Activated CD4-positive, alpha-beta memory T cell treated with anti-CD3 and anti-CD28 coated beads for 36 hours (primary cell): ENCODE measurements at regions of chr7 and their contacts with region 1.

Region 1: GRCh38 chr7:120981888-120982615 is 6.5 kb upstream of the CPED1 start:
- DNase-seq: peak; percentile 27
- H3K4me3 Mint-ChIP-seq: no peak overlapping the region
- H3K27ac Mint-ChIP-seq: peak overlapping the region; percentile 1
- H3K4me1 Mint-ChIP-seq: peaks cover 12% of the 10 kb centered on the region
- H3K27me3 Mint-ChIP-seq: peaks cover 5% of the 10 kb centered on the region

Region 2: DNA sequence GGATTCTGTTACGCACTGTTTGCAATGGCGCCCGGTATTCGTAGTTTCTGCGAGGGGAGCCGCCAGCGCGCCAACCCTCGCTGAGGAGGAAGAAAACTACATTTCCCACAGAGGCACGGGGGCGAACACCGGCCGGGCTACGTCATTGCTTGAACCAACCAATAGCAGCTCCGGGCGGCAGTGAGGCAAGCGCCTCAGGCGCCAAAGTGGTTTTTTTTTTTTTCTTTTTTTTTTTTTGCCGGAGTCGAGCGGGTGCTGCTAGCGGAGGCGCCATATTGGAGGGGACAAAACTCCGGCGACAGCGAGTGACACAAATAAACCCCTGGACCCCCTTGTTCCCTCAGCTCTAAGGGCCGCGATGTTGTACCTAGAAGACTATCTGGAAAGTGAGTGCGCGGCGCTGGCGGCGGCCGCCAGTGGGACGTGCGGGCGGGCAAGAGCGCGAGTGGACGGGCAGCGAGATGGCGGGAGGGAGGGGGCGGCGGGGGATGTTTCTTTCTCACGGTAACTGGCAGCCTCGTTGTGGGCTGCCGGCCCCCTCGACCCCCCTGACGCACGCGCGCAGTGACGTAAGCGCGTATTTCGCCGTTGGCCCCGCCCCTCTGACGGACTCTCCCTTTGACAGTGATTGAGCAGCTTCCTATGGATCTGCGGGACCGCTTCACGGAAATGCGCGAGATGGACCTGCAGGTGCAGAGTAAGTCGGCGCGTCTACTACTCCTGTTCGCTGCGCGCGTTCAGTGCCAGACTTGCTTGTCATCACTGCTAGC is 31.3 kb before region 1 on chr7 and contains the start of gene ING3:
- CTCF ChIA-PET with region 1: no interaction called
- POLR2A ChIA-PET with region 1: no interaction called
- intact Hi-C with region 1: loop called (anchors 1 kb)
- DNase-seq: peak; percentile 98
- H3K4me3 Mint-ChIP-seq: peak within 1 kb of the TSS; percentile 94
- H3K27ac Mint-ChIP-seq: peak within 1 kb of the TSS; percentile 98
- H3K4me1 Mint-ChIP-seq: peaks cover 22% of the 10 kb centered on the region
- H3K27me3 Mint-ChIP-seq: peaks cover 9% of the 10 kb centered on the region
- total RNA-seq, gene ING3: 23.5 to 24.8 TPM

Region 3: DNA sequence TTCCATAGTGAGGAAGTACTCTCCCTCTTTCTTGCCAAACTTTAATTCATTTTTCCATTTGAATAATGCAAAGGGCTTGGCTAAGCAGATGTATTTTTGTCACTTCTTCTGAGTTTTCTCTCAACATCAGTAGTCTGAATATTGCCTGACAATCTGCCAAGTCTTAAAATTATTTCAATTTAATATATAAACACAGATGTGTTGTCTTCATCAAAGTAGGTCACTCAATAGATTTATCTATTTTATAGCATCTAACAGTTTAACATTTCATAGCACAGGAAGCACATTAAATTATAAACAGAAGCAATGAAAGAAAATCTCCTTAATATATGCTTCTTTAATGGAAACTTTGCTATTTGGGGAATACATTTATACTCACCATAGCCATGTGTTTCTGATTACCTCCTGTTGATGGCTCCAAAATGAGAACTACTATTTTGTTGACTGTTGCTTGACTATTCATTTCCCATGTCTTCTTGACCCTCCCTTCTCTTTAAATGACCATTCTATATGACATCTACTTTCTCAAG is 11.0 kb after region 1 on chr7:
- CTCF ChIA-PET with region 1: interaction called, 20 read pairs
- POLR2A ChIA-PET with region 1: no interaction called
- intact Hi-C with region 1: loop called (anchors 1 kb)
- DNase-seq: no peak
- H3K4me3 Mint-ChIP-seq: no peak overlapping the region
- H3K27ac Mint-ChIP-seq: no peak overlapping the region
- H3K4me1 Mint-ChIP-seq: peaks cover 23% of the 10 kb centered on the region
- H3K27me3 Mint-ChIP-seq: peaks cover 27% of the 10 kb centered on the region